ENCODE measurements at regions of chr4 and their contacts with region 1.

Region 1: GRCh38 chr4:122252584-122252983 is 100.5 kb downstream of the BLTP1 start:
- DNase-seq: no peak
- ATAC-seq: no peak
- H3K4me3 ChIP-seq: no peak overlapping the region
- H3K27ac ChIP-seq: no peak overlapping the region
- H3K4me1 ChIP-seq: no peaks in the 10 kb centered on the region
- H3K27me3 ChIP-seq: no peaks in the 10 kb centered on the region
- CTCF ChIP-seq: no peak
- POLR2A ChIP-seq: no peak
- RAD21 ChIP-seq: no peak

Region 2: DNA sequence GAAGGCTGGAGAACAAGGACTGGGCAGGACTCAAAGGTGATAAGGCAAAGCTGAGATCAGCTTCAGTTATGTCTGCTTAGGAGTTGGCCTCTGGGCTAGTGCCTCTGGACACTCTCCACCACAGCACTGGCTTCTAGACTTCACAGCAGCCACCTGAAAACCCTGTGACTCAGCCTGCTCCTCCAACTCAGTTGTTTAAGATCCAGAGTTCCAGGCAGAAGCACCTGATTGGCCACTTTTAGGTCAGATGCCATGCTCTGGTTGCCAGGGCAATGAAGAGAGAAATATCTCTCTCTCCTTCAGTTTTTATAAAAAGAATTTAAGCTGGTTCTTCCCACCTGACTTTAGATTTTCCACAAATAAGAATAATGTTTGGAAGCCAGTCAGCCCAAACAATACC is 148.4 kb before region 1 on chr4:
- CTCF ChIA-PET with region 1: no interaction called
- POLR2A ChIA-PET with region 1: no interaction called
- dilution Hi-C with region 1: no loop called
- in situ Hi-C with region 1: no loop called
- intact Hi-C with region 1: no loop called
- DNase-seq: peak; percentile 35
- ATAC-seq: peak; percentile 35; the same call in 1 of the 2 replicates
- H3K4me3 ChIP-seq: no peak overlapping the region
- H3K27ac ChIP-seq: no peak overlapping the region
- H3K4me1 ChIP-seq: peaks cover 7% of the 10 kb centered on the region
- H3K27me3 ChIP-seq: no peaks in the 10 kb centered on the region; the same call in none of the 2 replicates
- CTCF ChIP-seq: no peak
- POLR2A ChIP-seq: no peak
- RAD21 ChIP-seq: no peak

Region 3: GRCh38 chr4:122205690-122206089 is 46.9 kb before region 1 on chr4:
- CTCF ChIA-PET with region 1: no interaction called
- POLR2A ChIA-PET with region 1: no interaction called
- dilution Hi-C with region 1: no loop called
- in situ Hi-C with region 1: no loop called
- intact Hi-C with region 1: loop called (anchors 10 kb)
- DNase-seq: no peak
- ATAC-seq: no peak
- H3K4me3 ChIP-seq: no peak overlapping the region
- H3K27ac ChIP-seq: no peak overlapping the region
- H3K4me1 ChIP-seq: no peaks in the 10 kb centered on the region
- H3K27me3 ChIP-seq: no peaks in the 10 kb centered on the region
- CTCF ChIP-seq: no peak
- POLR2A ChIP-seq: no peak
- RAD21 ChIP-seq: no peak